ENCODE measurements at regions of chr2 and their contacts with region 1.

Region 1: GRCh38 chr2:166627893-166628292 is 133.8 kb upstream of the SCN7A start:
- DNase-seq: no peak
- ATAC-seq: peak; percentile 58 to 79 (median 71)
- H3K4me3 ChIP-seq: no peak overlapping the region
- H3K27ac ChIP-seq: no peak overlapping the region
- H3K4me1 ChIP-seq: no peaks in the 10 kb centered on the region
- H3K27me3 ChIP-seq: no peaks in the 10 kb centered on the region
- CTCF ChIP-seq: peak in 8 of 12 donors; percentile 6 to 34 (median 23)
- POLR2A ChIP-seq: no peak

Region 2: DNA sequence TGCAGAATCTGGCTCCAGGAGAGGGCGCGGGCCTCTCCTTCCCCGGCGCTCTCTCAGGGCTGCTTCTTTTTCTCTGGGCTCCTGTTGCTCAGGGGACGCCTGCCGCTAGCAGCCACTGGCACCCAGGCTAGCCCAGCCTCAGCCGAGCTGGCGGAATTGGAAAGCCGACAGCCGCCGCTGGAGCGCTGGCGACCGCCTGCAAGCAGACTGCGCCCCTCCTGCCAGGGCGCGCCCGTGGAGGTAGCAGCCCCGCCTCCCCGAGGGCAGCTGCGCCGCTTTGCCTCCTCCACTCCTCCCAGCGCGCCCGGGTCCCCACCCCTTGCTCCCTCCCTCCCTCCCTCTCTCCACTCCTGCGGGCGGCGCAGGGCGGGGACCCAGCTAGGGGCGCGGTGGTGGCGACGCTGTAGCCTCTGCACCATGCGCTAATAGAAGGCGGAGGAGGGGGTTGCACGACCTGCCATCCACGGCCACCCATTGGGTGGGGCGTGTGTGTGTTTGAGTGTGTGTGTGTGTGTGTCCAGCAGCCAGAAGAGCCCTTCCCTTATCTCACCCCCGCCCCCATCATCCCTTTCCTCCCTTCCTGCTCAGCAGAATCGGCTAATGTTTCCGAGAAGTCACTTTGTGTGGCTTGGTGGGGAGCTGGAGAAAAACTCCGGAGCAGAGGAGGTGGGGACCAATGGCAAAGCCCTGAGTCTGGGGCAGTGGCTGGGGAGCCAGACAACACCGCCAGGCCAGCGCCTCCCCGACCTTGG is 252.0 kb before region 1 on chr2 and contains the start of gene SCN9A:
- intact Hi-C with region 1: no loop called
- DNase-seq: peak; percentile 66 to 88 (median 68)
- ATAC-seq: peak; percentile 67 to 97 (median 92)
- H3K4me3 ChIP-seq: peak within 1 kb of the TSS; percentile 33 to 69 (median 60)
- H3K27ac ChIP-seq: peak within 1 kb of the TSS in 3 of 12 donors; percentile 10 to 62 (median 30)
- H3K4me1 ChIP-seq: peaks cover 0 to 18% (median 4%) of the 10 kb centered on the region in 12 donors
- H3K27me3 ChIP-seq: peaks cover 0 to 5% (median 0%) of the 10 kb centered on the region in 9 donors
- CTCF ChIP-seq: no peak
- POLR2A ChIP-seq: no peak
- total RNA-seq, gene SCN9A: 0.50 to 3.2 (median 1.1) TPM

Region 3: GRCh38 chr2:166892397-166892796 is 264.5 kb after region 1 on chr2:
- intact Hi-C with region 1: loop called in 1 of 10 experiments (anchors 5 kb)
- DNase-seq: no peak
- ATAC-seq: no peak
- H3K4me3 ChIP-seq: no peak overlapping the region
- H3K27ac ChIP-seq: no peak overlapping the region
- H3K4me1 ChIP-seq: no peaks in the 10 kb centered on the region
- H3K27me3 ChIP-seq: no peaks in the 10 kb centered on the region
- CTCF ChIP-seq: no peak
- POLR2A ChIP-seq: no peak

Region 4: GRCh38 chr2:166900700-166901099 is 272.8 kb after region 1 on chr2:
- intact Hi-C with region 1: loop called in 1 of 10 experiments (anchors 2 kb)
- DNase-seq: no peak
- ATAC-seq: peak; percentile 32 to 78 (median 54)
- H3K4me3 ChIP-seq: no peak overlapping the region
- H3K27ac ChIP-seq: no peak overlapping the region
- H3K4me1 ChIP-seq: no peaks in the 10 kb centered on the region
- H3K27me3 ChIP-seq: no peaks in the 10 kb centered on the region
- CTCF ChIP-seq: peak in 6 of 12 donors; percentile 8 to 35 (median 18)
- POLR2A ChIP-seq: no peak

Measured in heart left ventricle (tissue), 16 donors.